Activated naive CD4-positive, alpha-beta T cell treated with anti-CD3 and anti-CD28 coated beads for 36 hours (primary cell): ENCODE measurements at regions of chr3 and their contacts with region 1.

Region 1: DNA sequence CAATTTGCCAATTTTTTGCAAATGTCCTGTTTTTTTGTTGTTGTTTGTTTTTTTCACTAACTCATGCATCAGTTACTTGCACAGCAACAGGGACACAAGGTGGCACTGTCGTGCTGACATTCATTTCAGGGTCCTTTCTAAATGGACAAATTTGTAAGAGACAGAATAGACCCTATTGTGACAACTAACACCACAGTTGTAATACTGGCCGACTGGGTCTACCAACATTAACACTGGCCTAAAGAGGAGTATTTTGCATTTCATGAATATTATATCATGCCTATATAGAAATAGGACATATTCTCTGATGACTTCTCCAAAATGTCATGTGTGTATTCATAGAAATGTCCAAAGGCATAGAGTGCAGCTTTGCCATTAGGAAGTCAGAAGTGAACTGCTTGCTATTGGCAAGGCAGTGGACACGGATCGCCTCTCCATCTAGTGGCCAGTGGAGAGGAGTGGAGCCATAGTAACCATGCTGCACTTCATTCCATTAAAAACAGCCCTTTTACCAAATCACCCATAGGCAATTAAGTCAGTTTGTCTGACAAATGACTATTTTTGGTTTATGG is 54.8 kb downstream of the ZBTB20 start:
- DNase-seq: peak; percentile 79
- H3K4me3 Mint-ChIP-seq: no peak overlapping the region
- H3K27ac Mint-ChIP-seq: no peak overlapping the region
- H3K4me1 Mint-ChIP-seq: peaks cover 34% of the 10 kb centered on the region
- H3K27me3 Mint-ChIP-seq: no peaks in the 10 kb centered on the region

Region 2: DNA sequence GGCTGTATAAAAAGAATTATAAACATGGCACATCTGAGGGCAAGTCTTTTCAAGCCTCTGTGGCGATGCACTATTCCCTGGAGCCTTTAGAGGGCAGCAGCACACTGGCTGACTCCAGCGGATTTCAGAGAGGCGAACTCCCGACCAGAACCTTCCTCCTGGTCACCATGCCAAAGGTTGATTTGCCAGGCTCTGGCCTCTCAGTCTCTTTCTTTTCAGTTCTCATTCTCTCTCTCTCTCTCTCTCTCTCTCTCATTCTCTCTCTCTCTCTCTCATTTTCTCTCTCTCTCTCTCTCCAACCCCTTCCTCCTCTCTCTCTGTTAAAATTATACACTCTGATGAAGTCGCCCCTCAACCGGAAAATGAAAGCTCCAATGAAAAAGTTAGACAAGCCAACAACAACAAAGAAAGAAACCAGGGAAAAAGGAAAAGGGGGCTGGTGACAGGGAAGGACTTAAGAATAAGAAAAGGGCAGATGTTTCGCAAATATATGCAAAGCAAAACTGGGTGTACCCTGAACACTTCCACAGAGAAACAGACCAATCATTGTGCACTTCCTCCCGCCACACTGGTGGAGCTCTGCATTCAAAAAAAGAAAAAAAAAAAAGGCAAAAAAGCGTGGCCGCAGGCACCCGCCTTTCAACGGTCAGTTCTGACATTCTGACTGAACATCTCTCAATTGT is 708.3 kb before region 1 on chr3:
- CTCF ChIA-PET with region 1: interaction called, 3 read pairs
- intact Hi-C with region 1: loop called (anchors 2 kb)
- DNase-seq: peak; percentile 82
- H3K4me3 Mint-ChIP-seq: peak overlapping the region; percentile 70
- H3K27ac Mint-ChIP-seq: peak overlapping the region; percentile 67
- H3K4me1 Mint-ChIP-seq: peaks cover 13% of the 10 kb centered on the region
- H3K27me3 Mint-ChIP-seq: no peaks in the 10 kb centered on the region

Region 3: DNA sequence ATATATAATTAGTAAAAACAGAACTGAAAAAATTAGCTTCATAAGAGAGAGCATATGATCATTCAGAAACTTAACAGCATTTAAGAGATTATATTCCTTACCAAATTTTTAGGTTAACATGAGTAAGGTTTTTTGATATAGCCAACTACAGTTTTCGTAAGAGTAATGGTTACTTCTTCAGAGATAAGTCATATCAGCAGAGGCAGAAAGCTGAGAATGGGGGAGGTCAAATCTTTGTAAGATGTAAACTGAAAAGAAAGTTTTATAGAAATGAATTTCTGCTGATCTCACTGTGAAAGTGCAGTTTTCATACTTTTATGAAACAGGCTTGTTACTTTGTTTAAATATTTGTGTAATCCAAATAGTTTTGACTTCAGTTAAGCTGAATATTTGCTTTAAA is 138.5 kb before region 1 on chr3:
- CTCF ChIA-PET with region 1: no interaction called
- intact Hi-C with region 1: no loop called
- DNase-seq: no peak
- H3K4me3 Mint-ChIP-seq: no peak overlapping the region
- H3K27ac Mint-ChIP-seq: no peak overlapping the region
- H3K4me1 Mint-ChIP-seq: peaks cover 4% of the 10 kb centered on the region
- H3K27me3 Mint-ChIP-seq: no peaks in the 10 kb centered on the region

Region 4: GRCh38 chr3:115040673-115041286 is 51.5 kb before region 1 on chr3:
- CTCF ChIA-PET with region 1: interaction called, 5 read pairs
- intact Hi-C with region 1: loop called (anchors 1 kb)
- DNase-seq: peak; percentile 65
- H3K4me3 Mint-ChIP-seq: no peak overlapping the region
- H3K27ac Mint-ChIP-seq: no peak overlapping the region
- H3K4me1 Mint-ChIP-seq: peaks cover 16% of the 10 kb centered on the region
- H3K27me3 Mint-ChIP-seq: no peaks in the 10 kb centered on the region

Region 5: GRCh38 chr3:115217678-115218451 is 125.6 kb after region 1 on chr3:
- CTCF ChIA-PET with region 1: interaction called, 9 read pairs
- intact Hi-C with region 1: loop called (anchors 1 kb)
- DNase-seq: peak; percentile 23
- H3K4me3 Mint-ChIP-seq: no peak overlapping the region
- H3K27ac Mint-ChIP-seq: no peak overlapping the region
- H3K4me1 Mint-ChIP-seq: no peaks in the 10 kb centered on the region
- H3K27me3 Mint-ChIP-seq: no peaks in the 10 kb centered on the region

Region 6: GRCh38 chr3:115692887-115693524 is 600.7 kb after region 1 on chr3:
- CTCF ChIA-PET with region 1: interaction called, 8 read pairs
- intact Hi-C with region 1: loop called (anchors 1 kb)
- DNase-seq: peak; percentile 86
- H3K4me3 Mint-ChIP-seq: no peak overlapping the region
- H3K27ac Mint-ChIP-seq: no peak overlapping the region
- H3K4me1 Mint-ChIP-seq: peaks cover 2% of the 10 kb centered on the region
- H3K27me3 Mint-ChIP-seq: no peaks in the 10 kb centered on the region